CD14-positive monocyte (primary cell): ENCODE measurements at regions of chr1 and their contacts with region 1.

Region 1: GRCh38 chr1:116178837-116179236 is 67.6 kb downstream of the MAB21L3 start:
- DNase-seq: no peak
- H3K4me3 ChIP-seq: no peak overlapping the region
- H3K4me3 Mint-ChIP-seq: no peak overlapping the region
- H3K27ac ChIP-seq: no peak overlapping the region
- H3K27ac Mint-ChIP-seq: no peak overlapping the region
- H3K4me1 ChIP-seq: no peaks in the 10 kb centered on the region
- H3K4me1 Mint-ChIP-seq: no peaks in the 10 kb centered on the region
- H3K27me3 ChIP-seq: peaks cover 0 to 2% of the 10 kb centered on the region in 2 donors
- H3K27me3 Mint-ChIP-seq: peaks cover 2 to 16% (median 7%) of the 10 kb centered on the region in 3 donors
- CTCF ChIP-seq: no peak

Region 2: DNA sequence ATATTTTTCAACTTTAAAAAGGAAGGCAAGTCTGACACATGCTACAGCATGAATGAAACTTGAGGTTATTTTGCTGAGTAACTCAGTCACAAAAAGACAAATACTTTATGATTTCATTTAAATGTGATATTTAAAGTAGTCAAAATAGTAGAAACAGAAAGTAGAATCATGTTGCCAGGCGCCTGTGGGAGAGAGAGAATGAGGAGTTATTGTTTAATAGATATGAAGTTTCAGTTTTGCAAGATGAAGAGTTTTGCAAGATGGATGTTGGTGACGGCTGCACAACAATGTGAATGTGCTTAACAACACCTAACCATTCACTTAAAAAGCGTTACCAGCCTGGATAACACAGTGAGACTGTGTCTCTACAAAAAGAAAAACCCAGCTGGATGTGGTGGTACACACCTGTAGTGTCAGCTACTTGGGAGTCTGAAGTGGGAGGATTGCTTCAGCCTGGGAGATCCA is 173.5 kb after region 1 on chr1:
- intact Hi-C with region 1: loop called in 1 of 2 experiments (anchors 10 kb)
- DNase-seq: no peak
- H3K4me3 ChIP-seq: no peak overlapping the region
- H3K4me3 Mint-ChIP-seq: no peak overlapping the region
- H3K27ac ChIP-seq: no peak overlapping the region
- H3K27ac Mint-ChIP-seq: peak overlapping the region in 1 of 7 donors; percentile 63
- H3K4me1 ChIP-seq: no peaks in the 10 kb centered on the region
- H3K4me1 Mint-ChIP-seq: peaks cover 18% of the 10 kb centered on the region
- H3K27me3 ChIP-seq: no peaks in the 10 kb centered on the region
- H3K27me3 Mint-ChIP-seq: peaks cover 3 to 6% (median 6%) of the 10 kb centered on the region in 3 donors
- CTCF ChIP-seq: no peak